Gastrocnemius medialis (tissue), 4 donors: ENCODE measurements at regions of chr1 and their contacts with region 1.

Region 1: DNA sequence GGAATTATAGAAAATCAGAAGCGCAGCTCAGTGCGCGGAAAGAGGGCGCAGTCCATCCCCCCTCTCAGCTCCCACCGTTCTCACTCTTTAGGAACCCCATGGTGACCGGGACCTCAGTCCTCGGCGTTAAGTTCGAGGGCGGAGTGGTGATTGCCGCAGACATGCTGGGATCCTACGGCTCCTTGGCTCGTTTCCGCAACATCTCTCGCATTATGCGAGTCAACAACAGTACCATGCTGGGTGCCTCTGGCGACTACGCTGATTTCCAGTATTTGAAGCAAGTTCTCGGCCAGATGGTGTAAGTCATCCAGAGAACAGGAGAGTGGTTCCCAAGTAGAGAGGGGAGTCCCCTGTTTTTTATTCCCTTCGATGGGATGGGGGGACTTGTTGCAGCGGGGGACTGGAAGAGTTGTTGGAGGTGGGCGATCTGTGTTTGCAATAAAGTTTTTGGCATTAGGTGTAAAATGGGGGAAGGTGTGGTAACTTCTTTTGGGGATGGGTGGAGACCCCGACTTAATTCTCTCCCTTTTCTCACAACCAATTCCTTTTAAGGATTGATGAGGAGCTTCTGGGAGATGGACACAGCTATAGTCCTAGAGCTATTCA is 620 bp downstream of the PSMB4 start:
- DNase-seq: peak in 1 of 2 donors; percentile 23
- ATAC-seq: peak; percentile 17 to 42
- H3K4me3 ChIP-seq: peak overlapping the region; percentile 82 to 98 (median 94)
- H3K27ac ChIP-seq: peak overlapping the region; percentile 95 to 98 (median 97)
- H3K4me1 ChIP-seq: peaks cover 13 to 17% of the 10 kb centered on the region in 2 donors
- H3K27me3 ChIP-seq: no peaks in the 10 kb centered on the region
- CTCF ChIP-seq: no peak
- POLR2A ChIP-seq: no peak

Region 2: DNA sequence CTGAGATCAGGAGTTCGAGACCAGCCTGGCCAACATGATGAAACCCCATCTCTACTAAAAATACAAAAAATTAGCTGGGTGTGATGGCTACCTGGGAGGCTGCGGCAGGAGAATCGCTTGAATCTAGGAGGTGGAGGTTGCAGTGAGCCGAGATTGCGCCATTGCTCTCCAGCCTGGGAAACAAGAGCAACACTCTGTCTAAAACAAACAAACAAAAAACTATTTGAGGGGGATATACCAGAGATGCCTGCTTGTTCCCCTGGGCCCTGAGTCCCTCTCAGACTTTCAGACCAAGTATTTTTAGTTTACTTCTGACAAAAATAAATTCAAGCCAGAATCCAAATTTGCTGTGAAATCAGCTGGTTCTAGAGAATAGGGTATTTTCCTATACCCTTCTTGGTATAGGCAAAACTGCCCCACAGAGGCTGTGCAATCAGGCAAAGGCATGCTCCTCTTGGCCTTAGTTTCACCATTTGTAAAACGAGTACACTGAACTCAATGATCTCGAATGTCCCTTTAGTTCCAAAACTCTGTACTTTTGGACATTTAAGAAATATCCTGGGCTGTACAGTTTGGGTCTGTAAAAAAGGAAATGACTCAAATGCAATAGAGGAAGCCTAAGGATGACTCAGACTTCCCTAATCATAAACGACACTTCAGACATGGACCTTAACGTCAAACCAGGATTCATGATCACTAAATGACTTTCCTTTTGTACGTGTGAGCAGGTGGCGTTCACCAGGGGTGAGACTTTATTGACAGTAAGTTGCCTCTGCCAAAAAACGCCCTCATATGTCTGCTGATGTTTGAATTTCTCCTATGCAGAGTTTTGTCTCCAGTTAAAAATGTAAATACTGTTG is 786.7 kb before region 1 on chr1:
- in situ Hi-C with region 1: no loop called
- intact Hi-C with region 1: no loop called
- DNase-seq: no peak
- ATAC-seq: peak; percentile 70 to 75
- H3K4me3 ChIP-seq: no peak overlapping the region
- H3K27ac ChIP-seq: peak overlapping the region; percentile 67 to 81 (median 76)
- H3K4me1 ChIP-seq: peaks cover 14 to 28% of the 10 kb centered on the region in 2 donors
- H3K27me3 ChIP-seq: no peaks in the 10 kb centered on the region
- CTCF ChIP-seq: no peak
- POLR2A ChIP-seq: peak in 1 of 2 donors; percentile 37

Region 3: GRCh38 chr1:151281969-151282882 is 117.8 kb before region 1 on chr1 and contains the start of gene ZNF687:
- in situ Hi-C with region 1: no loop called
- intact Hi-C with region 1: loop called (anchors 1 kb)
- DNase-seq: peak; percentile 100
- ATAC-seq: peak; percentile 85 to 88
- H3K4me3 ChIP-seq: peak within 1 kb of the TSS; percentile 70 to 81 (median 74)
- H3K27ac ChIP-seq: peak within 1 kb of the TSS; percentile 90 to 96 (median 94)
- H3K4me1 ChIP-seq: peaks cover 10 to 21% of the 10 kb centered on the region in 2 donors
- H3K27me3 ChIP-seq: no peaks in the 10 kb centered on the region
- CTCF ChIP-seq: no peak
- POLR2A ChIP-seq: peak; percentile 69 to 76
- total RNA-seq, gene ZNF687: 11.9 to 19.6 (median 16.6) TPM

Region 4: DNA sequence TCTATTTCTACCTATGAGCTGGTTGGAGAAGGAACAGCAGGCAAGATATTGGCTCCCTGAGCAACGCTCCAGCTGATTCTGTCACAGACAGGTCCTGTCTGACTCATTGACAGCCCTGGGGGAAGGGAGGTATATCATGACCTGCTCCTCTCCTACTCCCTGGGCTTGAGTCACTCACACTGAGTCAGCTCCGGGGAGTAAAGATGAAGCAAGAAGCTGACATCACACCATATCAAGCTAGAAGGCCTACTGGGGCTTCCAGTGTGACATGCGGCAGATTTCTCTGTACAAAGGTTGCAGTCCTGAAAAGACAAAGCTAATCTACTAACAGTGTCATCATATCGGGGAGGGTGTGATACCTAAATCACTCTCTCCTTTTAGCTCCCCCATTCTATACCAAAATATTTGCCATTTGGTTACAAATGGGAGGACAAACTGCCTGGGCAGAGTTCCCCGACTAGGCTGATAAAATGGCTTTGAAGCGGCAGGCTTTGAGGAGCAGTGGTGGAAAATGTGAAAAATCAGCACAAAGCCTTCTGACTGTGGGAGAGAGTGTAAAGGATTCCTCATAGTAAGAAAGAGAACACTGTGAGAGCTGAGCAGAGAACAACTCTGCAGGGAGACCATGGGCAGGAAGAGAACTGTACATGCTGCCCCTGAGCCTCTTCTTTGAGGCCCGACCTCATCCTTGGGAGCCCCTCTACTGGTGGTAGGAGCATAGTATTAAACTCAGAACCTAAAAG is 88.2 kb before region 1 on chr1:
- in situ Hi-C with region 1: loop called in 1 of 4 experiments (anchors 10 kb)
- intact Hi-C with region 1: loop called (anchors 5 kb)
- DNase-seq: peak; percentile 95 to 98
- ATAC-seq: peak; percentile 95 to 98
- H3K4me3 ChIP-seq: peak overlapping the region in 2 of 4 donors; percentile 8
- H3K27ac ChIP-seq: peak overlapping the region; percentile 91 to 95 (median 93)
- H3K4me1 ChIP-seq: peaks cover 55 to 69% of the 10 kb centered on the region in 2 donors
- H3K27me3 ChIP-seq: no peaks in the 10 kb centered on the region
- CTCF ChIP-seq: no peak
- POLR2A ChIP-seq: peak; percentile 15 to 16

Region 5: DNA sequence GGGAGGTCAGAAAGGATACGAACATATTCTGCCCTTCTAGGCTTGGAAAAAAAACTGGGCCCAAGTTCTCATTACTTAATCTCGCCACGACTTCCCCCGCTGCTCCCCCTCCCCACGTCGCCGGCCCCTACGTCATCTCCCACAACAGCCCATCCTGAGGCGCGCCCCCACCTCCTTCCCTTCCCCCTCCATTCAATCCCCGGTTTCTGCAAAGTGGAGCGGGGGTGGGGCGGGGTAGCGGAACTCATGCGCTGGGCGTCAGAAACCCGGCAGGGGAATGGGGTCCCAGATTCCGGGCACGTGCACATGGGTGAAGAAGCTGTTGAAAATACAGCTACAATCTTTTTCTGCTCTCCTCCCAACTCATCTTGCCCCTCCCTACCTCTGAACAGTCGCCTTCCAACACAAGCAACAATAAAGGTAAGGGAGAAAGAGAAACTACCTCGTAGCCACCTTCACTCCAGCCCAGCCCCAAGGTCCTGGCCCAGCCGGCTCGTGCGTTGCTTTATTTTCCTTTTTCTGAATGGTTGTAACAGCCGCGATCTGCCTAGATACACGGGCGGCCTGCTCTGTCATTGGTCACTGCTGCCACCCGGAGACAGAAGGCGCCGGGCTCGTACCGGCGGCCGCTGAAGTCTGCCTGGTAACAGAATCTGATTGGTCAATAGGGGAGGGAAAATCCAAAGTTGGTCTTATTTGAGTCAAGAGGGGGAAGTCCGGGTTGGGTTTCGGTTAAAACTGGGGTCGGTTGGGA is 53.0 kb before region 1 on chr1 and contains the start of gene RFX5:
- in situ Hi-C with region 1: no loop called
- intact Hi-C with region 1: loop called (anchors 1 kb)
- DNase-seq: peak; percentile 93 to 95
- ATAC-seq: peak; percentile 98 to 99
- H3K4me3 ChIP-seq: peak within 1 kb of the TSS; percentile 59 to 81 (median 71)
- H3K27ac ChIP-seq: peak within 1 kb of the TSS; percentile 83 to 89 (median 86)
- H3K4me1 ChIP-seq: peaks cover 0 to 13% of the 10 kb centered on the region in 2 donors
- H3K27me3 ChIP-seq: no peaks in the 10 kb centered on the region
- CTCF ChIP-seq: no peak
- POLR2A ChIP-seq: peak; percentile 50 to 64
- total RNA-seq, gene RFX5: 11.4 to 24.0 (median 20.6) TPM

Region 6: GRCh38 chr1:151371366-151372060 is 28.5 kb before region 1 on chr1:
- in situ Hi-C with region 1: no loop called
- intact Hi-C with region 1: loop called (anchors 2 kb)
- DNase-seq: peak; percentile 55 to 69
- ATAC-seq: peak; percentile 61 to 63
- H3K4me3 ChIP-seq: peak overlapping the region; percentile 53 to 63 (median 60)
- H3K27ac ChIP-seq: peak overlapping the region; percentile 79 to 85 (median 84)
- H3K4me1 ChIP-seq: peaks cover 40 to 54% of the 10 kb centered on the region in 2 donors
- H3K27me3 ChIP-seq: no peaks in the 10 kb centered on the region
- CTCF ChIP-seq: no peak
- POLR2A ChIP-seq: no peak

Region 7: GRCh38 chr1:151693076-151693651 is 293.2 kb after region 1 on chr1:
- in situ Hi-C with region 1: no loop called
- intact Hi-C with region 1: no loop called
- DNase-seq: no peak
- ATAC-seq: no peak
- H3K4me3 ChIP-seq: no peak overlapping the region
- H3K27ac ChIP-seq: no peak overlapping the region
- H3K4me1 ChIP-seq: no peaks in the 10 kb centered on the region
- H3K27me3 ChIP-seq: no peaks in the 10 kb centered on the region
- CTCF ChIP-seq: peak in 1 of 5 experiments; percentile 6
- POLR2A ChIP-seq: no peak